Heart left ventricle (tissue), 16 donors: ENCODE measurements at regions of chr11 and their contacts with region 1.

Region 1: GRCh38 chr11:128956401-128957201 is 13.9 kb upstream of the TP53AIP1 start:
- DNase-seq: peak in 1 of 5 donors; percentile 38
- ATAC-seq: peak; percentile 81 to 88 (median 82)
- H3K4me3 ChIP-seq: no peak overlapping the region
- H3K27ac ChIP-seq: no peak overlapping the region
- H3K4me1 ChIP-seq: no peaks in the 10 kb centered on the region
- H3K27me3 ChIP-seq: peaks cover 0 to 9% (median 0%) of the 10 kb centered on the region in 9 donors
- CTCF ChIP-seq: peak; percentile 53 to 81 (median 68)
- POLR2A ChIP-seq: no peak

Region 2: DNA sequence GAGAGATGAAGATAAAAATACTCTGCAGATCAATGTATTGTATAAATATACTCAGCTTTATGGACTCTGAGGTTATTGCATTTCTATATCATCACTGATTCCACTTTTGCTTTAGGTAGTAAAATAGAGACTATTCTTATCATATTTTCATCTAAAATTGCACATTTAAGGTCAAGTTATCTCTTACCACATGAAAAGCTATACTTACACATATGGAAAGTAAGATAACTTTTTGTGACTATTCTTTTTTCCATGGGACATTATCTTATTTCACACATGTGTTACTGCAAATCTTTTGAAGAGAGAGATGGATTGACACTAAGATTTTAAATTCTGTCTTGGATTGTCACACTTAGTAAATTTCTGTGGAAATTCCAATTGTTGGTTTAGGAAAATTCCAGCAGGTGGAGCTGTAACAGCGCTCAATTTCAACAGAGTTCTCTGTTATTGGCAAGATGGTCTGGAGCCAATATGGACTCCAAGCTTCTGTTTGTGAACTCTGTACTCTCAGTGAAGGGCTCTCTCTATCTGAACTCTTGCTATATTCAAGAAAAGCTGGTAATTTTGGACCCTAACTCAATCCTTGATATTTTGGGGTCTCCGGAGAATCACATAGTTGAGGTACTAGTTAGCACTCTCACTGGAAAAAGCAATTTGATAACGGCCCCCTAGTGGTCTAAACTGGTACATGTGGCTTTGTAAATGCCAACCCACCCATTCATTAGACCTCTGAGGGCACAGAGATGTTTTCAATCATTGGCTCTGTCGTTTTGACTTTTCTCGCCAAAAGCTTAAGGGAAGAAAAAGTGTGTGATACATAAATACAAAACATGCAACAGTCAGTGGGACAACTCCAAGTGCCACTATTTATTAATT is 798.9 kb before region 1 on chr11:
- intact Hi-C with region 1: loop called in 7 of 10 experiments (anchors 5 to 10 kb)
- DNase-seq: peak in 2 of 5 donors; percentile 25 to 37
- ATAC-seq: peak; percentile 58 to 84 (median 82)
- H3K4me3 ChIP-seq: peak overlapping the region in 6 of 12 donors; percentile 16 to 34 (median 26)
- H3K27ac ChIP-seq: no peak overlapping the region
- H3K4me1 ChIP-seq: peaks cover 0 to 11% (median 0%) of the 10 kb centered on the region in 12 donors
- H3K27me3 ChIP-seq: no peaks in the 10 kb centered on the region
- CTCF ChIP-seq: peak; percentile 71 to 95 (median 88)
- POLR2A ChIP-seq: no peak

Region 3: DNA sequence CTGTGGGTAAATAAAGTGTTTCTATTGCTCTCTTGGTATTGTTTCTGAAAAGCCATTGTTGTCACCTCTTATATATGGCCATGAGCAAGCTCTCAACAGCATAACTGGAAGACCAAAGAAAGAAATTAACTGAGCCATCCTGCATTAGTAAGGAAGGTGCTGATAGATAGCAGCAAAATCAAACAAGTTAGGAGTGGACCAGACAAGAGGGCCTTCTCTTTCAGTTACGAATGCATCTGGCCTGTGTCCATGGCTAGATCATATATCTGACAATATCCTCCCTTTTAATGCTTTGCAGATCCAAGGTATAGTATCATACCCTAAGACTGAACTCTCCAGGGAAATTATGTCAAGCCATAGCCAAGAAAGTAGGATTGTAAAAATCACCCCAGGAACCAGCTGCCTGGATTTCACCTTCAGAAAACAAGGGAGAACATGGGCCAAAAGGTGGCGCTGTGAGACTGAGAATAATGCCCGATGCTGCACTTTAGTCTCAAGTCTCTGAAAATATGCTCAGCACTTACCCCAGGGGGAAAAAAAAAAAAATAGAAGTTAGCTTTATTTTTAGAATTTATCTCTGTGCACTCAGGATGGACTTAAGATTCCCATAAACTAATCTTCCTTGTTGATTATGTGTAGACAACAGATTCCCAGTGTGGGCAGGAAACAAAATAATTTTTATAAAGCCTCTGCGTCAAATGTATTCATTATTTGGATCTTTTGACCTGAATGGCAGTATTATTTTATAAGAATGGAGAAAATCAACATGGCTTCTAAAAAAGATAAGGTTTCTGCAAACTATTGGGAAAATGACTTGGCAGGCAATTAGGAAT is 784.3 kb before region 1 on chr11:
- intact Hi-C with region 1: loop called in 2 of 10 experiments (anchors 10 kb)
- DNase-seq: peak; percentile 74 to 83 (median 80)
- ATAC-seq: peak in 3 of 4 donors; percentile 77 to 85 (median 84)
- H3K4me3 ChIP-seq: no peak overlapping the region
- H3K27ac ChIP-seq: peak overlapping the region in 1 of 12 donors; percentile 19
- H3K4me1 ChIP-seq: peaks cover 0 to 8% (median 0%) of the 10 kb centered on the region in 12 donors
- H3K27me3 ChIP-seq: peaks cover 0 to 7% (median 0%) of the 10 kb centered on the region in 9 donors
- CTCF ChIP-seq: peak; percentile 50 to 91 (median 80)
- POLR2A ChIP-seq: no peak

Region 4: DNA sequence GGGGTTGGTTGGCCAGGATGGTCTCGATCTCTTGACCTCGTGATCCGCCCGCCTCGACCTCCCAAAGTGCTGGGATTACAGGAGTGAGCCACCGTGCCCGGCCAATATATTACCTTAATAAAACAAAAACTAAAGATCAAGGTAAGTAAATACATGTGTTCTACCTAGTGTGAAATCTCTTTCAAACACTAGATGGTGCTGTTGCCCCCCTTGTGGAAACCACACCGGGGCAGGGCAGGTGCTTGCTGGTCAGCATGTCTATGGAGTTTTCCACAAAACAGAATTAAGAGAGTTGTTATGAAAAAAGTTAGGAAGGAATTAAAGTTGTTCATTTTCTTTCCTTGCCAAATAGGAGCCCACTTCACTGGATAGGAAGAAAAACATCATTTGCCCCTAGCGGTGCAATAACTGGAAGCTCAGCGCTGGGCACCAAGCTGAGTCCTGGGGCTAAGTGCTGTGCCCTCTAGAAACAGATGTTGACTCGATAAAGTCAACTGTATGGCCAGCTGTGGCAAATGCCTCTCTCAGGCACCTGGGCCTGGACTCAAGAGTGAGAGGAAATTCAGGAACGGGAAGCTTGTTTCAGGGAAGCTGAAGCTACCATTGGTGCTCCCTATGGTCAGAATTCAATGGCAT is 71.8 kb before region 1 on chr11:
- intact Hi-C with region 1: loop called (anchors 1 to 2 kb)
- DNase-seq: peak in 3 of 5 donors; percentile 45 to 57 (median 53)
- ATAC-seq: peak; percentile 55 to 88 (median 80)
- H3K4me3 ChIP-seq: no peak overlapping the region
- H3K27ac ChIP-seq: no peak overlapping the region
- H3K4me1 ChIP-seq: no peaks in the 10 kb centered on the region
- H3K27me3 ChIP-seq: peaks cover 0 to 30% (median 2%) of the 10 kb centered on the region in 9 donors
- CTCF ChIP-seq: peak; percentile 76 to 94 (median 86)
- POLR2A ChIP-seq: no peak

Region 5: GRCh38 chr11:129331871-129332274 is 375.3 kb after region 1 on chr11:
- intact Hi-C with region 1: loop called in 1 of 10 experiments (anchors 10 kb)
- DNase-seq: peak; percentile 72 to 85 (median 80)
- ATAC-seq: peak; percentile 61 to 98 (median 90)
- H3K4me3 ChIP-seq: no peak overlapping the region
- H3K27ac ChIP-seq: no peak overlapping the region
- H3K4me1 ChIP-seq: peaks cover 0 to 4% (median 0%) of the 10 kb centered on the region in 12 donors
- H3K27me3 ChIP-seq: no peaks in the 10 kb centered on the region
- CTCF ChIP-seq: peak; percentile 67 to 94 (median 87)
- POLR2A ChIP-seq: no peak